CD4-positive, alpha-beta memory T cell (primary cell): ENCODE measurements at regions of chr6 and their contacts with region 1.

Region 1: GRCh38 chr6:36340618-36341454 is 4.1 kb upstream of the BNIP5 start:
- DNase-seq: peak; percentile 59 to 66 (median 64)
- H3K4me3 ChIP-seq: no peak overlapping the region
- H3K4me3 Mint-ChIP-seq: peak overlapping the region; percentile 63 to 85 (median 74)
- H3K27ac ChIP-seq: no peak overlapping the region
- H3K27ac Mint-ChIP-seq: peak overlapping the region in 4 of 7 donors; percentile 7 to 88 (median 58)
- H3K4me1 ChIP-seq: peaks cover 20% of the 10 kb centered on the region
- H3K4me1 Mint-ChIP-seq: peaks cover 9 to 33% (median 14%) of the 10 kb centered on the region in 4 donors
- H3K27me3 ChIP-seq: peaks cover 7% of the 10 kb centered on the region
- H3K27me3 Mint-ChIP-seq: peaks cover 6 to 9% of the 10 kb centered on the region in 2 donors

Region 2: DNA sequence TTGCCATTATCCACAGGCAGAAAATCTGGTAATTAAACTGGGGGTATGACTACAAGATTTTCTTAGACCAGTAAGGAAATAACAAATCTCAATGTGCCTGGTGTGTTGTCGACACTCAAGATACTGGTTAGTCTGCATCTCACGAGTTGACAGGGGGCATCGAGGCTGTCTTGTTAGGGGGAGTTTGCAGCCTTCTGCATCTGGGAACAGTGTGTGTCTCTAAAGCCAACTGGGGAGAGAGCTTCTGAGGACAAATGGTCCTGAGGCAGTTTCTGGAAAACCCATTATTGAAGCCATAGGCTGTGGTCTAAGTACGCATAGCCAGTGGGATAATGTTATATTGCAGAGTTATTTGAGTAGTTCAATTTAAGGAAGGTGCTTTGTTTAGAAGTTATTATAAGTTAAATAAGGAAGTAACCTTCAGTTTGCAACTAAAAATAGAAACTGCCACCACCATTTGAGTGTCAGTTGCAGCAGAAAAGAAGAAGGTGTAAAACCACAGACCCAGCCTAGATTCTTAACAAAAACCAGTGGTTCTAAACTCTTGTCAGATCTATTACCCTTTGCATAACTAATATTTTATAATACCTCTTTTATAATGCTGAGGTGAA is 225.9 kb before region 1 on chr6:
- CTCF ChIA-PET with region 1: no interaction called
- POLR2A ChIA-PET with region 1: no interaction called
- intact Hi-C with region 1: no loop called
- DNase-seq: peak in 2 of 5 donors; percentile 35 to 41
- H3K4me3 ChIP-seq: peak overlapping the region in 1 of 2 donors; percentile 21
- H3K4me3 Mint-ChIP-seq: peak overlapping the region; percentile 7 to 92 (median 77)
- H3K27ac ChIP-seq: peak overlapping the region; percentile 42
- H3K27ac Mint-ChIP-seq: peak overlapping the region; percentile 88 to 96 (median 95)
- H3K4me1 ChIP-seq: peaks cover 80% of the 10 kb centered on the region
- H3K4me1 Mint-ChIP-seq: peaks cover 53 to 76% (median 66%) of the 10 kb centered on the region in 4 donors
- H3K27me3 ChIP-seq: no peaks in the 10 kb centered on the region
- H3K27me3 Mint-ChIP-seq: no peaks in the 10 kb centered on the region

Region 3: DNA sequence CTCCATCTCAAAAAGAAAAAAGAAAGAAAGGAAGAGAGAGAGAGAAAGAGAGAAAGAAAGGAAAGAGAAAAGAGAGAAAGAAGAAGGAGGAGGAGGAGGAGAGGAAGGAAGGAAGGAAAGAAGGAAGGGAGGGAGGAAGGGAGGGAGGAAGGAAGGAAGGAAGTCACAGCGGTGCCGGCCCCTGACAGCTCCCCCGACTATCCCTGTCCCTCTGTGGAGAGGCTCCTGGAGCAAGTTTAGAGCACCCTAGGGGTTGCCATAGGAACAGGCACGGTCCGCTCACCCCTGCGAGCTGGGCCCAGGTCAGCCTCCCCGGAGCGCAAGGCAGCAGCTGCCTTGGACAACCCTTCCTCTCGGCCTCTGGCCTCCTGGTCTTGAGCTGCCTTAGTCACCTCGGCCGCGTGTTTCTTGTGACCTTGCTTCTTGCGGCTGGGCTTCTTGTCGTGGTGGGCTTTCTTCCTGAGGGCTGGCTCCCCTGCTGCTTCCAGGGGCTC is 11.0 kb before region 1 on chr6:
- CTCF ChIA-PET with region 1: interaction called, 16 read pairs
- POLR2A ChIA-PET with region 1: no interaction called
- intact Hi-C with region 1: no loop called
- DNase-seq: no peak
- H3K4me3 ChIP-seq: no peak overlapping the region
- H3K4me3 Mint-ChIP-seq: no peak overlapping the region
- H3K27ac ChIP-seq: no peak overlapping the region
- H3K27ac Mint-ChIP-seq: peak overlapping the region in 1 of 7 donors; percentile 71
- H3K4me1 ChIP-seq: no peaks in the 10 kb centered on the region
- H3K4me1 Mint-ChIP-seq: peaks cover 0 to 5% (median 1%) of the 10 kb centered on the region in 4 donors
- H3K27me3 ChIP-seq: peaks cover 5% of the 10 kb centered on the region
- H3K27me3 Mint-ChIP-seq: peaks cover 15 to 16% of the 10 kb centered on the region in 2 donors

Region 4: GRCh38 chr6:36350681-36351571 is 10.1 kb after region 1 on chr6:
- CTCF ChIA-PET with region 1: interaction called, 24 read pairs
- POLR2A ChIA-PET with region 1: no interaction called
- intact Hi-C with region 1: no loop called
- DNase-seq: no peak
- H3K4me3 ChIP-seq: no peak overlapping the region
- H3K4me3 Mint-ChIP-seq: no peak overlapping the region
- H3K27ac ChIP-seq: no peak overlapping the region
- H3K27ac Mint-ChIP-seq: no peak overlapping the region
- H3K4me1 ChIP-seq: no peaks in the 10 kb centered on the region
- H3K4me1 Mint-ChIP-seq: no peaks in the 10 kb centered on the region
- H3K27me3 ChIP-seq: no peaks in the 10 kb centered on the region
- H3K27me3 Mint-ChIP-seq: peaks cover 0 to 4% of the 10 kb centered on the region in 2 donors

Region 5: GRCh38 chr6:36360241-36361054 is 19.6 kb after region 1 on chr6:
- CTCF ChIA-PET with region 1: interaction called, 36 read pairs
- POLR2A ChIA-PET with region 1: interaction called, 4 read pairs
- intact Hi-C with region 1: loop called (anchors 1 kb)
- DNase-seq: peak; percentile 63 to 73 (median 69)
- H3K4me3 ChIP-seq: no peak overlapping the region
- H3K4me3 Mint-ChIP-seq: peak overlapping the region in 1 of 8 donors; percentile 36
- H3K27ac ChIP-seq: no peak overlapping the region
- H3K27ac Mint-ChIP-seq: no peak overlapping the region
- H3K4me1 ChIP-seq: peaks cover 7% of the 10 kb centered on the region
- H3K4me1 Mint-ChIP-seq: peaks cover 2 to 9% (median 5%) of the 10 kb centered on the region in 4 donors
- H3K27me3 ChIP-seq: no peaks in the 10 kb centered on the region
- H3K27me3 Mint-ChIP-seq: peaks cover 0 to 3% of the 10 kb centered on the region in 2 donors

Region 6: DNA sequence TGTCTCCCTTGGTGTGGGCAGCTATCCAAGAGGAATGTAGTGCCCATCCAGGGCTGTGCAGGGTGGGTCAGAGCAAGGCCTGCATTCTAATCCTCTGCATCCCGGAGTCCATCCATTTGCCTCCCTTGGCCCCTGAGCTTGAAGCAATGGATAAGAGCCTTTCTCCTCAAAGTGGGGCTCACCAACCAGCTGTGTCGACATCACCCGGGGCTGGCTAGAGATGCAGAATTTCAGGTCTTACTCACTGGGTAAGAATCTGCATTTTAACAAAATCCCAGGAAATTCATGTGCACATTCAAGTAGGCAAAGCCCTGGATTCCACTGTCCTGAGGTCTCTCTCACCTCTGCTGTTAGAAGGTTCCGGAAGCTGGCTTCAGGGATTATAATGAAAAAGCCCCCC is 1261.5 kb after region 1 on chr6:
- CTCF ChIA-PET with region 1: no interaction called
- POLR2A ChIA-PET with region 1: no interaction called
- intact Hi-C with region 1: no loop called
- DNase-seq: no peak
- H3K4me3 ChIP-seq: no peak overlapping the region
- H3K4me3 Mint-ChIP-seq: no peak overlapping the region
- H3K27ac ChIP-seq: no peak overlapping the region
- H3K27ac Mint-ChIP-seq: no peak overlapping the region
- H3K4me1 ChIP-seq: no peaks in the 10 kb centered on the region
- H3K4me1 Mint-ChIP-seq: no peaks in the 10 kb centered on the region
- H3K27me3 ChIP-seq: no peaks in the 10 kb centered on the region
- H3K27me3 Mint-ChIP-seq: no peaks in the 10 kb centered on the region